Activated T-helper 1 cell treated with anti-CD3 and anti-CD28 coated beads, Interleukin-12 subunit alpha, Interleukin-12 subunit beta, Interleukin-2, Interleukin-4 antibody, amounts not matched to agents 30 ng/mL and 10 ng/mL and 1 ng/mL, durations not matched to agents 14 hours and 24 hours and 36 hours (primary cell): ENCODE measurements at regions of chr1 and their contacts with region 1.

Region 1: DNA sequence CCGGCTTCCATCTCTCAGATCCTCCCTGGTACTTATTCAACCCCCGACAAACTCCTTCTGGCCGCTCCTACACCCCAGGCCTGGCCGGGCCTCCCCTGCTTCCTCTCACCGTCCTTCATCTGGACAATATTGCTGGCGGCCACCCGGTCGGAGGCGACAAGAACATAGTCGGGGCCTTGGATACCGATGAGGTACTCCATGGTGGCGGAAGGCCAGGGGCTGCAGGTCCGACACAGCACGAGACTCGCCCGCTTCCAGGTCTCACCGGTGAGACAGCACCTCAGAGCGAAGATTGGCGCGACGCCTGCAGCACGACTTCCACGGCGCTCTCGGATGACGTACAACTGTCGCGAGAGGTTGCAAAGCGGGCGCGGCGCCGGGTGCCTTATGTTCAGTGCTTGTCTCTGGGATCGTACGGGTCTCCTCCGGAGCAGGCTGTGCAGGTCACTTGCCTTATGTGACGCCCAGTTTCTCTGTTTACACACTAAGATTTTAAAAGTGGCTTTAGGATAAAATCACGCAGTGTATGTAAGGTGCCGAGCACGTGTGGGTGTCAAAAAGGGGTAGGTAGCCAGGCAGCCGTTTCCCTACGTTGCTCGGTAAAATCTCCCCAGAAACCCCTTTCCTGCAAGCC is at the start of gene PSMB2:
- DNase-seq: peak; percentile 95
- H3K4me3 Mint-ChIP-seq: peak within 1 kb of the TSS; percentile 99
- H3K27ac Mint-ChIP-seq: peak within 1 kb of the TSS; percentile 99
- H3K4me1 Mint-ChIP-seq: peaks cover 40% of the 10 kb centered on the region
- H3K27me3 Mint-ChIP-seq: peaks cover 26% of the 10 kb centered on the region
- total RNA-seq, gene PSMB2: 125 and 126 TPM in 2 replicates

Region 2: GRCh38 chr1:34865981-34866761 is 775.2 kb before region 1 on chr1:
- intact Hi-C with region 1: no loop called
- DNase-seq: peak; percentile 85
- H3K4me3 Mint-ChIP-seq: peak overlapping the region; percentile 80
- H3K27ac Mint-ChIP-seq: peak overlapping the region; percentile 86
- H3K4me1 Mint-ChIP-seq: peaks cover 36% of the 10 kb centered on the region
- H3K27me3 Mint-ChIP-seq: peaks cover 12% of the 10 kb centered on the region

Region 3: GRCh38 chr1:35268282-35269200 is 372.8 kb before region 1 on chr1 and contains the start of gene ZMYM4:
- intact Hi-C with region 1: loop called (anchors 2 kb)
- DNase-seq: peak; percentile 88
- H3K4me3 Mint-ChIP-seq: peak within 1 kb of the TSS; percentile 87
- H3K27ac Mint-ChIP-seq: peak within 1 kb of the TSS; percentile 93
- H3K4me1 Mint-ChIP-seq: peaks cover 38% of the 10 kb centered on the region
- H3K27me3 Mint-ChIP-seq: no peaks in the 10 kb centered on the region
- total RNA-seq, gene ZMYM4: 25.1 and 33.0 TPM in 2 replicates

Region 4: DNA sequence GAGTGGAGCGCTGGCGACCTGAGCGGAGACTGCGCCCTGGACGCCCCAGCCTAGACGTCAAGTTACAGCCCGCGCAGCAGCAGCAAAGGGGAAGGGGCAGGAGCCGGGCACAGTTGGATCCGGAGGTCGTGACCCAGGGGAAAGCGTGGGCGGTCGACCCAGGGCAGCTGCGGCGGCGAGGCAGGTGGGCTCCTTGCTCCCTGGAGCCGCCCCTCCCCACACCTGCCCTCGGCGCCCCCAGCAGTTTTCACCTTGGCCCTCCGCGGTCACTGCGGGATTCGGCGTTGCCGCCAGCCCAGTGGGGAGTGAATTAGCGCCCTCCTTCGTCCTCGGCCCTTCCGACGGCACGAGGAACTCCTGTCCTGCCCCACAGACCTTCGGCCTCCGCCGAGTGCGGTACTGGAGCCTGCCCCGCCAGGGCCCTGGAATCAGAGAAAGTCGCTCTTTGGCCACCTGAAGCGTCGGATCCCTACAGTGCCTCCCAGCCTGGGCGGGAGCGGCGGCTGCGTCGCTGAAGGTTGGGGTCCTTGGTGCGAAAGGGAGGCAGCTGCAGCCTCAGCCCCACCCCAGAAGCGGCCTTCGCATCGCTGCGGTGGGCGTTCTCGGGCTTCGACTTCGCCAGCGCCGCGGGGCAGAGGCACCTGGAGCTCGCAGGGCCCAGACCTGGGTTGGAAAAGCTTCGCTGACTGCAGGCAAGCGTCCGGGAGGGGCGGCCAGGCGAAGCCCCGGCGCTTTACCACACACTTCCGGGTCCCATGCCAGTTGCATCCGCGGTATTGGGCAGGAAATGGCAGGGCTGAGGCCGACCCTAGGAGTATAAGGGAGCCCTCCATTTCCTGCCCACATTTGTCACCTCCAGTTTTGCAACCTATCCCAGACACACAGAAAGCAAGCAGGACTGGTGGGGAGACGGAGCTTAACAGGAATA is 64.0 kb before region 1 on chr1:
- intact Hi-C with region 1: loop called (anchors 5 kb)
- DNase-seq: peak; percentile 56
- H3K4me3 Mint-ChIP-seq: peak overlapping the region; percentile 76
- H3K27ac Mint-ChIP-seq: peak overlapping the region; percentile 21
- H3K4me1 Mint-ChIP-seq: peaks cover 27% of the 10 kb centered on the region
- H3K27me3 Mint-ChIP-seq: peaks cover 28% of the 10 kb centered on the region